Endothelial cell of umbilical vein (primary cell): ENCODE measurements at regions of chr18 and their contacts with region 1.

Region 1: DNA sequence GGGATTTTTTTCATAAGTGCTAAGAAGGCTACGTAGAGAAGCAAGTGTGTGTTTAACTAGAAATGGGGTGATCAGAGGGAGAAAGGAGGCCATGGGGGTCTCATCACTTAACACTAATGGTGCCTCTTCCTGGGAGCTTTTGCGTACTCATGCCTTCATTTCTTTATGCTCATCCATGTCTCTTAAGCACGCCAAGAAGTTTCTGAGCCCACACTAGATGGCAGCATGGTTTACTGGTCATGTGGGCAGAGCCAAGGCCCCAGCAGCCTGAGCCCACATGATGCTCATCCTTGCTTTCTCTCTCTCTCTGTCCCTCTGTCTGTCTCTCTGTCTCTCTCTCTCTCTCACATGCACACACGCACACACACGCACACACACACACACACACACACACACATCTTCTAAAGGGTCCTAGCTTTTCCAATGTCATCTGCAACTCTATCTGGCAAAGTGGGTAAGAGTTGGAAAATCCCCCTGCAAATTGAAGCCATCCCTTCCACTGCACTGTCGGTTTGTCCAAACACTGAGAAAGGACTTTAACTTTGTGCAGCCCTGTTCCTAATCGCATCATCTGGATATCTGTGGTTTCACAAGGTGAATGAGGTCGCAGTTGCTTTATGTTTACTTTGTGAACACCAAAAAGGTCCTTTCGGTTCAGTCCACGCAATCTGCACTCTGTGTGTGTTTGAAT is 137.1 kb upstream of the CCDC68 start:
- DNase-seq: peak; percentile 64
- H3K4me3 ChIP-seq: no peak overlapping the region
- H3K27ac ChIP-seq: peak overlapping the region; percentile 80
- H3K4me1 ChIP-seq: peaks cover 39% of the 10 kb centered on the region
- H3K27me3 ChIP-seq: peaks cover 0 to 8% of the 10 kb centered on the region in 2 experiments
- CTCF ChIP-seq: peak; percentile 46 to 59
- POLR2A ChIP-seq: no peak

Region 2: DNA sequence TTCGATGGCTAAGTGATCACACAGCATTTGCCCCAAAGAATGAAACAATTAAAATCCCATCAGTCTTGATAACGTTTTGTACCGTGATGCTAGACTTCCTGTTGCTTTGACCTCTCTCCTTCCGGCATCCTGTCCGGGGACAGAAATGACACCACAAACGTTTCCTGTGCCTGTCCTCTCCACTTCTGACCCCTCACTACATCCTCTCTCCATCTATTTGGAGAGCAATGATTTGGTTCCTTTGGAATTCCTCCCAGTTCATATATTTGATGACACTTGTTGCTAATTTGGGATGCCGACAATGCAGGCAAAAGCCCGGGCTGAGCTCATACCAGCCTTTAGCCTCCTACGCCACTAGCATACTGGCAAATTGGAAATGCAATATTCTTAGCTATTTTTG is 14.0 kb after region 1 on chr18:
- CTCF ChIA-PET with region 1: interaction called, 11 read pairs
- POLR2A ChIA-PET with region 1: no interaction called
- dilution Hi-C with region 1: no loop called
- intact Hi-C with region 1: loop called (anchors 1 kb)
- DNase-seq: peak; percentile 73
- H3K4me3 ChIP-seq: no peak overlapping the region
- H3K27ac ChIP-seq: peak overlapping the region; percentile 90
- H3K4me1 ChIP-seq: peaks cover 23% of the 10 kb centered on the region
- H3K27me3 ChIP-seq: no peaks in the 10 kb centered on the region
- CTCF ChIP-seq: no peak
- POLR2A ChIP-seq: peak; percentile 35

Region 3: DNA sequence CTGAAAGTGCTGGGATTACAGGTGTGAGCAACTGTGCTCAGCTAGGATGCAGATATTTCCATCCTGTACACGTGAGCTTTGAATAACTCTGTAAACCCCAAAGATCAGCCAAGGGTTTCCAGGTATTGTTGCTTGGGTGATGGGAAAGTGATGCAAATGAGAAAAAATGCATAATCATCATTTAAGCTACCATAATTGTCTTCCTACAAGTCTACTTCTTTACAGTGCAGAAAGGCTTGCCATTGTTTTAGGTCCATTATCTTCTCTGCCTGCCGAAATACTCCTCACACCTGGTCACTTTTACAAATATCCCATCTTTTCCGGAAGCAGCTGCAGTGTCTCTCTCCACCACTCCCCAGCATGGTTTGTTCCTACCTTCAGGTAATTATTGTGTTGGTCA is 122.7 kb after region 1 on chr18:
- CTCF ChIA-PET with region 1: interaction called, 3 read pairs
- POLR2A ChIA-PET with region 1: no interaction called
- dilution Hi-C with region 1: no loop called
- intact Hi-C with region 1: loop called (anchors 2 kb)
- DNase-seq: peak; percentile 52
- H3K4me3 ChIP-seq: no peak overlapping the region
- H3K27ac ChIP-seq: no peak overlapping the region
- H3K4me1 ChIP-seq: no peaks in the 10 kb centered on the region
- H3K27me3 ChIP-seq: peaks cover 6 to 7% of the 10 kb centered on the region in 2 experiments
- CTCF ChIP-seq: no peak
- POLR2A ChIP-seq: no peak

Region 4: DNA sequence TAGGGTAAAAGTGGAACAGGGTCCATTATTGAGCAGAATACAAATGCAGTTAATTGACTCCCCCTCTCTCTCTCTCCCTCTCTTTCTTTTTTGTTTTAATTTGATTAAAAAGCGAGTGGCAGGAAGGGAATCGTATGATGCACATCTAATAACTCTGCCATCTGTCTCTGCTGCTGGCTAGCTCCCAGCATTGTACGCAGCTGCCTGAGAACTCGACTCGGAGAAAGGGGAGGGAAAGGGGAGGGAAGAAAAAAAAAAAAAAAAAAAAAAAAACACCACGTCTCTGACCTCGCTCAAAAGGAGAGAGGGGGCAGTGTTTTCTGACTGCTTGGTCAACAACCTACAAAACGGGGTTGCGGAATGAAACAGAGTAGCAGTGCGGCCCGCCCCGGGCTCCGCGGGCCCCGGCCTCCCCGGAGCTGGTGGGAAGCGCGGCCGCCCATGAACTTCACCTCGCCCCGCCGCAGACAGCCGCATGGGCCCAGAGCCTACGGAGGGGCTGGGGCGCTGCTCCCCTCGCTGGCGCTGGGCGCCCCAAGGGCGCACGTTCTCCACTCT is 225.9 kb after region 1 on chr18:
- CTCF ChIA-PET with region 1: no interaction called
- POLR2A ChIA-PET with region 1: no interaction called
- dilution Hi-C with region 1: no loop called
- intact Hi-C with region 1: loop called (anchors 2 kb)
- DNase-seq: peak; percentile 96
- H3K4me3 ChIP-seq: peak overlapping the region; percentile 28 to 89 (median 52)
- H3K27ac ChIP-seq: peak overlapping the region; percentile 82
- H3K4me1 ChIP-seq: peaks cover 66% of the 10 kb centered on the region
- H3K27me3 ChIP-seq: no peaks in the 10 kb centered on the region
- CTCF ChIP-seq: peak; percentile 4 to 20
- POLR2A ChIP-seq: no peak

Region 5: DNA sequence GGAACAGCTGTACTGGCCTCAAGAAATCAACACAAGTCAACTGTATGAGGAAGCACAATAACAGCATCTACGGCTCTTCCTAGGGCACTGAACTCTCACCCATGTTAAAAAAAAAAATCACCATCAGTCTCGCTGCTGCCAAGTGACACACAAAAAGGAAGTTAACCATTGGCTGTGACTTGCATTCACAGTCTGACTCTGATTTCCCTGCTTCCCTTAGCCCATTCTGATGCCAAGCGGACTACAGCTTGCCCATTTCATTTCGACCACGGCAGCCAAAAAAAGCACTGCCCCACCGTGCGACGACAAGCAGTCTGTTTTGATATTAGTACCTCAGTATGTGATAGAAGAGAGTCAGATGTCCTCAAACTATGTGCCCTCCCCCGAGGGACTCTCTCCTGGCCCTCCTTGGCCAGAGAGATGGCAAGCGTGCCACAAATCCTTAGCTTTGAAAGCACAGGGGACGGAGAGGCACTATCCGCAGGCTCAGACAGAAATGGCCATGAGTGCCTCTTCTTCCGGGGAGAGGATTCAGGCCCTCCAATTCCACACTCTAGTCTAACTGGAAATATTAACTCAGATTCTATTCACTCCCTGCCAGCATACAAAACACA is 241.6 kb after region 1 on chr18:
- CTCF ChIA-PET with region 1: no interaction called
- POLR2A ChIA-PET with region 1: no interaction called
- dilution Hi-C with region 1: no loop called
- intact Hi-C with region 1: loop called (anchors 5 kb)
- DNase-seq: peak; percentile 92
- H3K4me3 ChIP-seq: no peak overlapping the region
- H3K27ac ChIP-seq: peak overlapping the region; percentile 83
- H3K4me1 ChIP-seq: peaks cover 45% of the 10 kb centered on the region
- H3K27me3 ChIP-seq: no peaks in the 10 kb centered on the region
- CTCF ChIP-seq: no peak
- POLR2A ChIP-seq: no peak

Region 6: DNA sequence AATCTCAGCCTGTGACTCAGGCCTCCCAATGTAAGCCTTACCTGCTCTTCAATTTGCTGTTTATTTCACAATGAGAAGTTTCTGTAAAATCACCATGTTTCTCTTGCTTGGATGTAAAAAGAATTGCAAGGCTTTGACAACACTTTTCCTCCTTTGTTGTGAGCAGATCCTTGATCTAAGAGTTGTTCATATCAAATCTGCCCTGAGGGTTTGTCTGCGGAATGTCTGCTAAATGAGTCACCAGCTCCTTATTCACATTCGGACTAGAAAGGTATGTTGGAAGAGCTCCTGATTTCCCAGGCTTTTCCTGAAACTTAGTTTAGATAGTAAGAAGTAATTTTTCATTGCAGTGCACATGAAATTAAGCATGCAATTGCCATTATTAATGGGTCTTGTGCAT is 759.8 kb after region 1 on chr18:
- CTCF ChIA-PET with region 1: interaction called, 3 read pairs
- POLR2A ChIA-PET with region 1: no interaction called
- dilution Hi-C with region 1: no loop called
- intact Hi-C with region 1: loop called (anchors 2 kb)
- DNase-seq: peak; percentile 64
- H3K4me3 ChIP-seq: no peak overlapping the region
- H3K27ac ChIP-seq: no peak overlapping the region
- H3K4me1 ChIP-seq: peaks cover 10% of the 10 kb centered on the region
- H3K27me3 ChIP-seq: no peaks in the 10 kb centered on the region
- CTCF ChIP-seq: no peak
- POLR2A ChIP-seq: no peak